ENCODE measurements at regions of chr1 and their contacts with region 1.

Region 1: GRCh38 chr1:54052934-54053744 is at the starts of genes TCEANC2 and TMEM59:
- DNase-seq: peak; percentile 94 to 100 (median 97)
- ATAC-seq: peak; percentile 89
- H3K4me3 ChIP-seq: peak within 1 kb of the TSS; percentile 87 to 89
- H3K4me3 Mint-ChIP-seq: no peak within 1 kb of the TSS
- H3K27ac ChIP-seq: peak within 1 kb of the TSS; percentile 89 to 93
- H3K27ac Mint-ChIP-seq: no peak within 1 kb of the TSS
- H3K4me1 ChIP-seq: peaks cover 39% of the 10 kb centered on the region
- H3K4me1 Mint-ChIP-seq: peaks cover 51% of the 10 kb centered on the region
- H3K27me3 ChIP-seq: no peaks in the 10 kb centered on the region
- H3K27me3 Mint-ChIP-seq: no peaks in the 10 kb centered on the region
- CTCF ChIP-seq: no peak
- total RNA-seq, gene TCEANC2: 1.8 to 2.1 TPM
- total RNA-seq, gene TMEM59: 125 to 142 TPM

Region 2: DNA sequence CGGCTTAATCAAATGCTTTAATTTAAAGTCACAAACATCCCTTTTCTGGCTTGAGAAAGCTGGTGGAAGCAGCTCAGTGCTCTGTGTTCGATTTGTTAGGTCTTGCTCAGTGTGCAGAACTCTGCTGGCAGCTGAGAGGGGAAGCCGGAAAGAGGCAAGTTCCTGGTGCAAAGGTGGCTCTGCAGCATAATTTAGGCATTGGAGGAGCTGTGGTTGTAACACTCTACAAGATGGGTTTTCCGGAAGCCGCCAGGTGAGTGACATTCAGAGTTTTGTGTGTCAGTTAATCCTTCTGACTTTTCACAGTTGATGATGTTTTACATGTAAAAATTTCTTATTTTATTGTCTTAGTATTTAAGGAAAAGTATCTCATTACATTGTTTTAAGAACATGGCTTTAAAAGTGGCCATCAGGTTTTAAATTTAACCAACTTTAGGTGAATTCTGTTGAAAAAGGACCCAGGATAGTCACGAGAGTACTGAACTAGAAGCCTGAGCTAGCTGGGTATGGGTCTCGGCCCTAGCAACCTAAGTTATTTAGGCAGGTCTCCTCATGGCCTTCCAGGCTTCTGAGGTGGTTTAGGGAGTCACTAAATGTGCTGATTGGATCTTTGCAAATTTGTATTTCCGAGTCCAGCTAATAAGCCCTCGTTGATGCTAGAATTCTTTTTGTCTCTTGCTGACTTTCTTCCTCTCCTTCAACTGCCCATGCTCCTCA is 1038.2 kb before region 1 on chr1:
- CTCF ChIA-PET with region 1: no interaction called
- POLR2A ChIA-PET with region 1: no interaction called
- intact Hi-C with region 1: loop called (anchors 5 to 10 kb)
- DNase-seq: peak; percentile 51 to 94 (median 79)
- ATAC-seq: peak; percentile 100
- H3K4me3 ChIP-seq: peak overlapping the region; percentile 67 to 68
- H3K4me3 Mint-ChIP-seq: peak overlapping the region; percentile 84
- H3K27ac ChIP-seq: peak overlapping the region; percentile 42 to 48
- H3K27ac Mint-ChIP-seq: peak overlapping the region; percentile 79
- H3K4me1 ChIP-seq: peaks cover 21% of the 10 kb centered on the region
- H3K4me1 Mint-ChIP-seq: peaks cover 38% of the 10 kb centered on the region
- H3K27me3 ChIP-seq: no peaks in the 10 kb centered on the region
- H3K27me3 Mint-ChIP-seq: no peaks in the 10 kb centered on the region
- CTCF ChIP-seq: no peak

Region 3: DNA sequence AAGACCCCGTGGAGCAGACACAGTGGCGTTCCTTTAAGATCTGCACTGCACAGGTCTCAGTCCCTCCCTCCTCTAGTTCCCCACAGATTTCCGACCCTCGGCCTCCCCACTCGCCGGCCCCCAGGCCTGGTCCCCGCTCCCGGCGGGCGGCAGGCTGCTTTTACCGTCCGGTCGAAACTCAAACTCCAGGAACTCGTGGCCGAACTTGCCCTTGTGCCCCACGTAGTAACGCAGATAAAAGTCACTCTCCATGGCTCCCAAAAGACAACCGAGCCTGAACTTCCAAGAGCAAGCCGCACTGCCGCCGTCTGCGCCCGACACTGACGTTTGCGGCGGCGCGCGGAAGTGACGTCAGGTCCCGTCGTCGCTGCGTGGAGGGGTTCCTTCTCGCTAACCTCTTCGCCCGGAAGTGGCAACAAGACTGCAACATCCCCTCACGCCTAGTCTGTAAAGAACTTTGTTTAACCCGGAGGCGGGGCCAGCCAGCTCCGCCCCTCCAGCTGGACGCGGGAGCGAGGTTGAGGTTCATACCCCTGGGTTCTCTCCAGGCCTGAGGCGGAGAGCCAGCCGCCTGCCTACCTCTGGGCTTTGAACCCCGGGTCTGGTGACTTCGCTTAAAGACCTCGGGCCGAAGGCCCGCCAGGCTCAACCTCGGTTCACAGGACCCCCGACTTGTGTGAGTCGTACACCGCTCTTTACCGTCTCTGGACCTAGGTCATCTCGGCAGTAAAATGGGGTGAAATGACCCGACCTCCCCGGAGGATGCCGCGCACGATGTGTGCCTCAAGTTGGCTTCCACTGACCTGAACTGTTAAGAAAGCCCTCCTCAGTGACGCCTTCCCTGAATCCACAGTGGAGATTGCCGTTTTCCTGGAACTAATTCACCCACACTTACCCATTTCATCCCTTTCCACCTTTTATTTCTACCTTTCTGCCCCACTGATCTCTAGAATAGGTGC is 814.7 kb before region 1 on chr1 and contains the start of gene MAGOH:
- CTCF ChIA-PET with region 1: no interaction called
- POLR2A ChIA-PET with region 1: no interaction called
- intact Hi-C with region 1: loop called in 1 of 2 experiments (anchors 10 kb)
- DNase-seq: peak; percentile 87 to 97 (median 95)
- ATAC-seq: peak; percentile 97
- H3K4me3 ChIP-seq: peak within 1 kb of the TSS; percentile 94 to 100
- H3K4me3 Mint-ChIP-seq: peak within 1 kb of the TSS; percentile 97
- H3K27ac ChIP-seq: peak within 1 kb of the TSS; percentile 89 to 95
- H3K27ac Mint-ChIP-seq: peak within 1 kb of the TSS; percentile 96
- H3K4me1 ChIP-seq: peaks cover 17% of the 10 kb centered on the region
- H3K4me1 Mint-ChIP-seq: peaks cover 33% of the 10 kb centered on the region
- H3K27me3 ChIP-seq: no peaks in the 10 kb centered on the region
- H3K27me3 Mint-ChIP-seq: no peaks in the 10 kb centered on the region
- CTCF ChIP-seq: no peak
- total RNA-seq, gene MAGOH: 77.2 to 79.5 TPM

Region 4: GRCh38 chr1:53889304-53890298 is 163.5 kb before region 1 on chr1 and contains the start of gene YIPF1:
- CTCF ChIA-PET with region 1: no interaction called
- POLR2A ChIA-PET with region 1: no interaction called
- intact Hi-C with region 1: loop called (anchors 1 to 2 kb)
- DNase-seq: peak; percentile 68 to 92 (median 86)
- ATAC-seq: peak; percentile 98
- H3K4me3 ChIP-seq: peak within 1 kb of the TSS; percentile 69 to 97
- H3K4me3 Mint-ChIP-seq: peak within 1 kb of the TSS; percentile 94
- H3K27ac ChIP-seq: peak within 1 kb of the TSS; percentile 42 to 56
- H3K27ac Mint-ChIP-seq: peak within 1 kb of the TSS; percentile 94
- H3K4me1 ChIP-seq: peaks cover 19% of the 10 kb centered on the region
- H3K4me1 Mint-ChIP-seq: peaks cover 49% of the 10 kb centered on the region
- H3K27me3 ChIP-seq: no peaks in the 10 kb centered on the region
- H3K27me3 Mint-ChIP-seq: no peaks in the 10 kb centered on the region
- CTCF ChIP-seq: no peak
- total RNA-seq, gene YIPF1: 4.6 to 5.4 TPM

Region 5: GRCh38 chr1:54153548-54154439 is 100.7 kb after region 1 on chr1:
- CTCF ChIA-PET with region 1: no interaction called
- POLR2A ChIA-PET with region 1: no interaction called
- intact Hi-C with region 1: no loop called
- DNase-seq: no peak
- ATAC-seq: no peak
- H3K4me3 ChIP-seq: no peak overlapping the region
- H3K4me3 Mint-ChIP-seq: no peak overlapping the region
- H3K27ac ChIP-seq: no peak overlapping the region
- H3K27ac Mint-ChIP-seq: no peak overlapping the region
- H3K4me1 ChIP-seq: no peaks in the 10 kb centered on the region
- H3K4me1 Mint-ChIP-seq: no peaks in the 10 kb centered on the region
- H3K27me3 ChIP-seq: no peaks in the 10 kb centered on the region
- H3K27me3 Mint-ChIP-seq: no peaks in the 10 kb centered on the region
- CTCF ChIP-seq: no peak

Region 6: DNA sequence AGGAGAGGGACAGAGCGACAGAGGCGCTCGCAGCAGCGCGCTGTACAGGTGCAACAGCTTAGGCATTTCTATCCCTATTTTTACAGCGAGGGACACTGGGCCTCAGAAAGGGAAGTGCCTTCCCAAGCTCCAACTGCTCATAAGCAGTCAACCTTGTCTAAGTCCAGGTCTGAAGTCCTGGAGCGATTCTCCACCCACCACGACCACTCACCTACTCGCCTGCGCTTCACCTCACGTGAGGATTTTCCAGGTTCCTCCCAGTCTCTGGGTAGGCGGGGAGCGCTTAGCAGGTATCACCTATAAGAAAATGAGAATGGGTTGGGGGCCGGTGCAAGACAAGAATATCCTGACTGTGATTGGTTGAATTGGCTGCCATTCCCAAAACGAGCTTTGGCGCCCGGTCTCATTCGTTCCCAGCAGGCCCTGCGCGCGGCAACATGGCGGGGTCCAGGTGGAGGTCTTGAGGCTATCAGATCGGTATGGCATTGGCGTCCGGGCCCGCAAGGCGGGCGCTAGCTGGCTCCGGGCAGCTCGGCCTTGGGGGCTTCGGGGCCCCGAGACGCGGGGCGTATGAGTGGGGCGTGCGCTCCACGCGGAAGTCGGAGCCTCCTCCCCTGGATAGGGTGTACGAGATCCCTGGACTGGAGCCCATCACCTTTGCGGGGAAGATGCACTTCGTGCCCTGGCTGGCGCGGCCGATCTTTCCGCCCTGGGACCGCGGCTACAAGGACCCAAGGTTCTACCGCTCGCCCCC is 146.8 kb after region 1 on chr1 and contains the starts of genes CYB5RL and MRPL37:
- CTCF ChIA-PET with region 1: interaction called, 3 read pairs
- POLR2A ChIA-PET with region 1: no interaction called
- intact Hi-C with region 1: loop called (anchors 2 to 5 kb)
- DNase-seq: peak; percentile 74 to 96 (median 89)
- ATAC-seq: peak; percentile 97
- H3K4me3 ChIP-seq: peak within 1 kb of the TSS; percentile 59 to 93
- H3K4me3 Mint-ChIP-seq: peak within 1 kb of the TSS; percentile 94
- H3K27ac ChIP-seq: peak within 1 kb of the TSS; percentile 60 to 75
- H3K27ac Mint-ChIP-seq: peak within 1 kb of the TSS; percentile 84
- H3K4me1 ChIP-seq: peaks cover 19% of the 10 kb centered on the region
- H3K4me1 Mint-ChIP-seq: peaks cover 43% of the 10 kb centered on the region
- H3K27me3 ChIP-seq: no peaks in the 10 kb centered on the region
- H3K27me3 Mint-ChIP-seq: no peaks in the 10 kb centered on the region
- CTCF ChIP-seq: no peak
- total RNA-seq, gene CYB5RL: 2.1 to 3.0 TPM
- total RNA-seq, gene MRPL37: 27.4 to 29.8 TPM

Region 7: GRCh38 chr1:54800899-54801759 is 748.0 kb after region 1 on chr1 and contains the start of gene TTC22:
- CTCF ChIA-PET with region 1: interaction called, 4 read pairs
- POLR2A ChIA-PET with region 1: no interaction called
- intact Hi-C with region 1: loop called in 1 of 2 experiments (anchors 2 kb)
- DNase-seq: peak; percentile 39 to 84 (median 72)
- ATAC-seq: peak; percentile 81
- H3K4me3 ChIP-seq: peak within 1 kb of the TSS; percentile 59 to 79
- H3K4me3 Mint-ChIP-seq: peak within 1 kb of the TSS; percentile 97
- H3K27ac ChIP-seq: peak within 1 kb of the TSS; percentile 38 to 74
- H3K27ac Mint-ChIP-seq: peak within 1 kb of the TSS; percentile 93
- H3K4me1 ChIP-seq: peaks cover 37% of the 10 kb centered on the region
- H3K4me1 Mint-ChIP-seq: peaks cover 58% of the 10 kb centered on the region
- H3K27me3 ChIP-seq: no peaks in the 10 kb centered on the region
- H3K27me3 Mint-ChIP-seq: no peaks in the 10 kb centered on the region
- CTCF ChIP-seq: peak; percentile 54
- total RNA-seq, gene TTC22: 3.1 to 4.2 TPM